Caco-2 (cell line): ENCODE measurements at regions of chr10 and their contacts with region 1.

Region 1: DNA sequence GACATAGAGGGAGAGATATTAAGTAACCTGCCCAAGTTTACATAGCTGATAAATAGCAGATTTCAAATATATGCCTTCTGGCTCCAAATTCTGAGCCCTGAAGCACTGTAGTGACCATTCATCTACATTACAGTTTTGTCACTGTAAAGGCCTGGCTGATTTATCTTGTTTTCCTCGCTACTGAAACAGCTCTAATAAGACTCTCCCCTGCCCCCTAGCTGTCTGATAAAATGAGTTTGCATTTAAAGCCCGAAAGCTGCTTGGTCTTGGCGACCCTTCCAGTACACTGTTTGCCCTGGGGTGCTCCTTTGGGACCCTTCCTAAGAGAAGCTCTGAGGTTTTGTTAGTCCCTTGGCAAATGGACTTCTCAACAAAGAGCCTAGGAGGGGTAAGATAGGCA is 59.7 kb upstream of the RAB11FIP2 start:
- DNase-seq: peak; percentile 32 to 60
- H3K4me3 ChIP-seq: no peak overlapping the region
- H3K4me3 Mint-ChIP-seq: no peak overlapping the region
- H3K27ac Mint-ChIP-seq: no peak overlapping the region
- H3K4me1 ChIP-seq: no peaks in the 10 kb centered on the region
- H3K4me1 Mint-ChIP-seq: no peaks in the 10 kb centered on the region
- H3K27me3 ChIP-seq: no peaks in the 10 kb centered on the region
- H3K27me3 Mint-ChIP-seq: no peaks in the 10 kb centered on the region
- CTCF ChIP-seq: peak; percentile 56 to 65

Region 2: DNA sequence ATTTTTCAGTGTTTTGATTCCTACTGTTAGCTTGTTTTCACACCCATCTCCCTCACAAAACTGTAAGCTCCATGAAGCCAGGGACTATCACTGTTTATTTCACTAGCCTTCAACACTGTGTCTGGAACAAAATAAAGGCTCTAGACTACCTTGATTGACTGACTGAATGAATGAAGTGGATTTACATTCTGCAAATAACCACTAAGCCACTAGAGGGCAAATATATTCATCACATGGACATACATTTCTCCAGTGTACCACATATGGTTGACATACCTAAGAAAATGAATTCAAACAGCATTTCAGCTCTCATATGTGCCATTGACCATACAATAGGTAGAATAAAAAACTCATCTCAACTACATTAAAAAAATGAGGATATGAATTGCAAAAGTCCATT is 245.6 kb before region 1 on chr10:
- CTCF ChIA-PET with region 1: no interaction called
- POLR2A ChIA-PET with region 1: no interaction called
- intact Hi-C with region 1: loop called (anchors 1 kb)
- DNase-seq: peak in 1 of 2 experiments; percentile 17
- H3K4me3 ChIP-seq: no peak overlapping the region
- H3K4me3 Mint-ChIP-seq: no peak overlapping the region
- H3K27ac Mint-ChIP-seq: no peak overlapping the region
- H3K4me1 ChIP-seq: no peaks in the 10 kb centered on the region
- H3K4me1 Mint-ChIP-seq: no peaks in the 10 kb centered on the region
- H3K27me3 ChIP-seq: no peaks in the 10 kb centered on the region
- H3K27me3 Mint-ChIP-seq: peaks cover 12% of the 10 kb centered on the region
- CTCF ChIP-seq: peak; percentile 53 to 62

Region 3: GRCh38 chr10:117929327-117930067 is 176.9 kb before region 1 on chr10:
- CTCF ChIA-PET with region 1: interaction called, 20 read pairs
- POLR2A ChIA-PET with region 1: no interaction called
- intact Hi-C with region 1: loop called (anchors 1 kb)
- DNase-seq: peak in 1 of 2 experiments; percentile 34
- H3K4me3 ChIP-seq: no peak overlapping the region
- H3K4me3 Mint-ChIP-seq: no peak overlapping the region
- H3K27ac Mint-ChIP-seq: no peak overlapping the region
- H3K4me1 ChIP-seq: no peaks in the 10 kb centered on the region
- H3K4me1 Mint-ChIP-seq: no peaks in the 10 kb centered on the region
- H3K27me3 ChIP-seq: no peaks in the 10 kb centered on the region
- H3K27me3 Mint-ChIP-seq: peaks cover 12% of the 10 kb centered on the region
- CTCF ChIP-seq: peak; percentile 26 to 55

Region 4: DNA sequence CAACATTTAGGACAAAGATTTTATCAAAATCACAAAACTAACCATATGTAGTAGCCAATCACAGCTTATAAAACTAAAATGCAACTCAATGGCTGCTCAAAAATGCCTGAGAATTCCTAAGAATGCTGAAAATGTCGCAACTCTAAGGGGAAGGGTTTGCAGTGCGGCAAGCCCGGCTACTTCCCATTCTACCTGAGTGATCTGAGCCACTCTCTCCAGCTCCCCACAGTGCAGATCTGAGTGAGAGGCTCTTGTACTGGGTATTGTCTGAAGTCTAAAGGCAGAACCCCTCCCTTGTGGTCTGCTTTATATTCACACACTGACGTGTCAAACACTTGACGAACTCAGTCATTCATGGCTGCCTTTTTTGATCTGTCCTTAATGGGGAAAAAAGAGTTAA is 88.6 kb before region 1 on chr10:
- CTCF ChIA-PET with region 1: no interaction called
- POLR2A ChIA-PET with region 1: no interaction called
- intact Hi-C with region 1: loop called (anchors 5 kb)
- DNase-seq: peak in 1 of 2 experiments; percentile 11
- H3K4me3 ChIP-seq: no peak overlapping the region
- H3K4me3 Mint-ChIP-seq: no peak overlapping the region
- H3K27ac Mint-ChIP-seq: no peak overlapping the region
- H3K4me1 ChIP-seq: peaks cover 7% of the 10 kb centered on the region; the same call in 1 of the 2 replicates
- H3K4me1 Mint-ChIP-seq: peaks cover 16% of the 10 kb centered on the region
- H3K27me3 ChIP-seq: no peaks in the 10 kb centered on the region
- H3K27me3 Mint-ChIP-seq: no peaks in the 10 kb centered on the region
- CTCF ChIP-seq: no peak

Region 5: GRCh38 chr10:118035354-118036005 is 70.9 kb before region 1 on chr10:
- CTCF ChIA-PET with region 1: interaction called, 3 read pairs
- POLR2A ChIA-PET with region 1: no interaction called
- intact Hi-C with region 1: loop called (anchors 2 kb)
- DNase-seq: no peak
- H3K4me3 ChIP-seq: no peak overlapping the region
- H3K4me3 Mint-ChIP-seq: no peak overlapping the region
- H3K27ac Mint-ChIP-seq: no peak overlapping the region
- H3K4me1 ChIP-seq: peaks cover 7% of the 10 kb centered on the region; the same call in 1 of the 2 replicates
- H3K4me1 Mint-ChIP-seq: peaks cover 6% of the 10 kb centered on the region
- H3K27me3 ChIP-seq: no peaks in the 10 kb centered on the region
- H3K27me3 Mint-ChIP-seq: no peaks in the 10 kb centered on the region
- CTCF ChIP-seq: no peak

Region 6: DNA sequence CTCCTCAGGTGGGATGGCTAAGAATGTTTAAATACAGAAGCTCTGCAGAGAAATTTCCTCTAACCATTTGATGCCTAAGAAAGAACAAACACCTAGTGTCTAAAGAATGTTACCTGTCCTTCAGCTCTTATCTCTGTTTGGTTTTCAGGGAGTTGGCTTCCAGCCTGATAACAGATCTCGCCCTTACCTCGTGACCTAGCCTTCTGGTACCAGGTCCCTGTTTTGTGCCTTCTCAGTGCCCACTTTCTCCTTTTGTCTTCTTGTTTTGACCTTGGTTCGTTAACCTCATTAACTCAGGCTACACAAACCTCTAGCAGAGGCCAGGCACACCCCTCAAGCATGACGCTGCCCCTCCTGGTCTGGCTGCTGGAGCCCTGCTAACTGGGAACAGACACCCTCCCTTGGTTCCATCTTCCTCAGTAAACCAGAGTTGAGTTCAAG is 43.6 kb before region 1 on chr10:
- CTCF ChIA-PET with region 1: interaction called, 3 read pairs
- POLR2A ChIA-PET with region 1: no interaction called
- intact Hi-C with region 1: loop called (anchors 2 kb)
- DNase-seq: peak; percentile 79 to 85
- H3K4me3 ChIP-seq: no peak overlapping the region
- H3K4me3 Mint-ChIP-seq: peak overlapping the region; percentile 52
- H3K27ac Mint-ChIP-seq: peak overlapping the region; percentile 88
- H3K4me1 ChIP-seq: peaks cover 43% of the 10 kb centered on the region
- H3K4me1 Mint-ChIP-seq: peaks cover 24% of the 10 kb centered on the region
- H3K27me3 ChIP-seq: no peaks in the 10 kb centered on the region
- H3K27me3 Mint-ChIP-seq: no peaks in the 10 kb centered on the region
- CTCF ChIP-seq: no peak